HepG2 (cell line): ENCODE measurements at regions of chr15 and their contacts with region 1.

Region 1: GRCh38 chr15:56491110-56491722 is 26.3 kb upstream of the MNS1 start:
- DNase-seq: peak; percentile 54
- ATAC-seq: peak; percentile 92
- H3K4me3 ChIP-seq: no peak overlapping the region
- H3K27ac ChIP-seq: no peak overlapping the region
- H3K4me1 ChIP-seq: 0 out of 2 replicates have a peak, but pooled peaks cover 6% of the 10 kb centered on the region
- H3K27me3 ChIP-seq: no peaks in the 10 kb centered on the region
- CTCF ChIP-seq: peak; percentile 82
- EP300 ChIP-seq: no peak
- POLR2A ChIP-seq: no peak
- RAD21 ChIP-seq: no peak; the same call in 1 of the 2 replicates

Region 2: DNA sequence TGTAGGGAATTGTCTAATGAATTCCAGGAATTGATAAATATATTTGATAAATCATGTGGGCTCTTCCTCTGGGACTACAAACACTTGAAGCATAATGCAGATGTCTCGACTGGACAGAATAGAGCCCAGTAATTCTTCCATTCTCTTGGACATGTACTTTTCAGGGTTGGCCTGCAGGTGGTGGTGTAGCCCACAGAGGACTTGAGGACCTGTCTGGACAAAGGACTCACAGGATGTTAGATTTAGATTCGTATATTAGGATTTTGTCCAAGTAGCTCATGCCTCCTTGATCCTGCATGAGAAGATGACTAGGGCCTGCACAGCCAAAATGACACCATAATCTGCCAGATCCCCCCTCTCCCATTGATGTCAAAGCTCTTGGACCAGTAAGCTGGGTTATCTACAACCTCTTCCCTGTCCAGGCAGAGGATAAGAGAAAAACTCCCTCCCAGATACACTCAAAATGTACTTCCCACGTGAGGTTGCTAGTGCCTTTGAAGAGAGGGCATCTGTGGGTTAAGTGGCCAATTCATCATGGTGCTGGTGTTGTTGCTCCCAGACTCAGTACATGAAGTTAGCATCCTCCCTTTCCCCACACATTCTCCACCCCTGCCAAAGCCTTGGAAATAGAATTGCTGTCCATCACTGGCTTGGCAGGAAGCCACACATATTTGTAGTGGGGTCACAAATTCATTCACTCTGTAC is 330.7 kb after region 1 on chr15:
- CTCF ChIA-PET with region 1: no interaction called
- POLR2A ChIA-PET with region 1: no interaction called
- in situ Hi-C with region 1: no loop called
- intact Hi-C with region 1: loop called (anchors 10 kb)
- DNase-seq: peak; percentile 43
- ATAC-seq: peak; percentile 93
- H3K4me3 ChIP-seq: no peak overlapping the region
- H3K27ac ChIP-seq: no peak overlapping the region
- H3K4me1 ChIP-seq: no peaks in the 10 kb centered on the region
- H3K27me3 ChIP-seq: no peaks in the 10 kb centered on the region
- CTCF ChIP-seq: peak; percentile 82
- EP300 ChIP-seq: no peak
- POLR2A ChIP-seq: no peak
- RAD21 ChIP-seq: peak; percentile 52; the same call in 1 of the 2 replicates

Region 3: DNA sequence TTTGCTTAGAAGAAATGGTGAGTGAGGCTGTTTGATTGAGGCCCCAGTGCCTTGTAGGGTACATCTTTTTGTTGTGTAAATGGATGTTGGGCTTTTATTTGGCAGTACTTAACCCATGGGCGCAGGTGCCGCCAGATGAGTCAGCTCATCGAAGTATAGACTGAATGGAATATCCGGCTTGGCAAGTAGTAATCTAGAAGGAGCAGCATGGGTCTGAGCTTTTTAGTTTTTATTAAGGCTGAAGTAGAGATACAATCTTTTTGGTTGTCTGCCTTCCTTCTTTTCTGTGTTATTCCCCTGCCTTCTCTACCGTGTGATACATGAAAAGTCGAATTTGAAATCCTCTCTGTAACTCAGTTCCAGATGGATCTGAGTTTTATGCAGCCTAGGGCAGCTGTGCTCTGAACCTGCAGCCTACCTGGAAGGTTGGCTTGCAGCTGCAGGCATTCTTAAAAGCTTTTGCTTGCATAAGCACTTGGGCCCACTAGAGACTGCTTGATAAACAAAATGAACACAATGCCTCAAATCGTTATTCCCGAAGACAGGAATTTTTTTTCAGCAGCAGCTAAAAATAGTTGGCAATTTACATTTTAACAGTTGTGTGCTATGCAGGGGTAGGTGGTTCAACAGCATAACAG is 707.6 kb after region 1 on chr15:
- CTCF ChIA-PET with region 1: no interaction called
- POLR2A ChIA-PET with region 1: no interaction called
- in situ Hi-C with region 1: loop called (anchors 25 kb)
- intact Hi-C with region 1: no loop called
- DNase-seq: no peak
- ATAC-seq: no peak
- H3K4me3 ChIP-seq: no peak overlapping the region
- H3K27ac ChIP-seq: no peak overlapping the region
- H3K4me1 ChIP-seq: peaks cover 13% of the 10 kb centered on the region
- H3K27me3 ChIP-seq: no peaks in the 10 kb centered on the region
- CTCF ChIP-seq: no peak
- EP300 ChIP-seq: no peak
- POLR2A ChIP-seq: no peak
- RAD21 ChIP-seq: no peak

Region 4: GRCh38 chr15:57306161-57306943 is 815.1 kb after region 1 on chr15:
- CTCF ChIA-PET with region 1: interaction called, 4 read pairs
- POLR2A ChIA-PET with region 1: no interaction called
- in situ Hi-C with region 1: loop called (anchors 10 kb)
- intact Hi-C with region 1: loop called (anchors 2 kb)
- DNase-seq: peak; percentile 38
- ATAC-seq: peak; percentile 87
- H3K4me3 ChIP-seq: peak overlapping the region in 2 of 3 experiments; percentile 39 to 46; a peak in 4 of 6 replicates
- H3K27ac ChIP-seq: no peak overlapping the region
- H3K4me1 ChIP-seq: peaks cover 37% of the 10 kb centered on the region
- H3K27me3 ChIP-seq: no peaks in the 10 kb centered on the region
- CTCF ChIP-seq: peak; percentile 83
- EP300 ChIP-seq: no peak
- POLR2A ChIP-seq: no peak
- RAD21 ChIP-seq: peak; percentile 75